Caco-2 (cell line): ENCODE measurements at regions of chr12 and their contacts with region 1.

Region 1: DNA sequence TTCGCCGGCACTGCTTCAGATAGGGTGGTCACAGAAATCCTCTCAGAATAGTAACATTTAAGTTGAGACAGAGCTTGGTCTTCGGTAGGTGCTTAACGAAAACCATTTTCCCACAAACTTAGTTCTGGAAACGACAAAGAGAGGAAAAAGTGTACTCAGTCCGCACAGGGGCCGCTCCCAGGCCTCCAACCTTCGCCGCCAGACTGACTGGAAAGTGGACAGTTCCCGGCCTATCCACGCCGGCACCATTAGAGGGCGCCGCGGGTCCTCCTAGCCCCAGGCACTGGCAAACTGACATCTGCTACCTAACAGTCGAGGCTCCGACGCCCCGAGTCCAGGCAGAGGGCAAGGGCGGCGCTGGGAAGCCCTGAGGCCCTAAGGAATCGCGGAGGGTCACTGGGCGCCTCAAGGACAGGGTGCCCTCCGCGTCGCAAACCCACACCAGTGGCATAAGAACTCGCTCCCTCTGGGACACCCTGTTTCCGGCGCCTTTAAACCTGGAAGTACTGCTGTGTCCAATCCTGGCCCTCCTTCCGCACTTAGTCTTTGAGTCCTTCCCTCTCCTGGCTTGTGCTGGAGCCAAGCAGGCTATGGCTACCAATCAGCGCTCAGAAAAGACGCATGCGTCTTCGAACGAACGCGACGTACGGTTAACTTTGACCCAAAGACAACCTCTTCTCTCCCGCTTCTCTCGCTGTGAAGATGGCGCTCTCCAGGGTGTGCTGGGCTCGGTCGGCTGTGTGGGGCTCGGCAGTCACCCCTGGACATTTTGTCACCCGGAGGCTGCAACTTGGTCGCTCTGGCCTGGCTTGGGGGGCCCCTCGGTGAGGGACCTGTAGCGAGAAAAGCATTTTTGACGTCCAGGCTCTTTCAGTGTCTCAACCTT is at the start of gene LETMD1:
- DNase-seq: peak; percentile 96 to 98
- H3K4me3 ChIP-seq: peak within 1 kb of the TSS; percentile 64
- H3K4me3 Mint-ChIP-seq: peak within 1 kb of the TSS; percentile 99
- H3K27ac Mint-ChIP-seq: peak within 1 kb of the TSS; percentile 96
- H3K4me1 ChIP-seq: no peaks in the 10 kb centered on the region
- H3K4me1 Mint-ChIP-seq: no peaks in the 10 kb centered on the region
- H3K27me3 ChIP-seq: no peaks in the 10 kb centered on the region
- H3K27me3 Mint-ChIP-seq: no peaks in the 10 kb centered on the region
- CTCF ChIP-seq: peak; percentile 93 to 99
- total RNA-seq, gene LETMD1: 90.6 and 95.6 TPM in 2 replicates

Region 2: GRCh38 chr12:50620109-50620977 is 427.6 kb before region 1 on chr12:
- CTCF ChIA-PET with region 1: no interaction called
- POLR2A ChIA-PET with region 1: no interaction called
- intact Hi-C with region 1: no loop called
- DNase-seq: peak; percentile 50 to 54
- H3K4me3 ChIP-seq: no peak overlapping the region
- H3K4me3 Mint-ChIP-seq: peak overlapping the region; percentile 11
- H3K27ac Mint-ChIP-seq: peak overlapping the region; percentile 94
- H3K4me1 ChIP-seq: peaks cover 67% of the 10 kb centered on the region
- H3K4me1 Mint-ChIP-seq: peaks cover 60% of the 10 kb centered on the region
- H3K27me3 ChIP-seq: no peaks in the 10 kb centered on the region
- H3K27me3 Mint-ChIP-seq: no peaks in the 10 kb centered on the region
- CTCF ChIP-seq: no peak

Region 3: GRCh38 chr12:50848963-50849362 is 198.9 kb before region 1 on chr12:
- CTCF ChIA-PET with region 1: no interaction called
- POLR2A ChIA-PET with region 1: no interaction called
- intact Hi-C with region 1: no loop called
- DNase-seq: no peak
- H3K4me3 ChIP-seq: no peak overlapping the region
- H3K4me3 Mint-ChIP-seq: no peak overlapping the region
- H3K27ac Mint-ChIP-seq: no peak overlapping the region
- H3K4me1 ChIP-seq: peaks cover 8% of the 10 kb centered on the region; the same call in 1 of the 2 replicates
- H3K4me1 Mint-ChIP-seq: peaks cover 7% of the 10 kb centered on the region
- H3K27me3 ChIP-seq: no peaks in the 10 kb centered on the region
- H3K27me3 Mint-ChIP-seq: peaks cover 15% of the 10 kb centered on the region
- CTCF ChIP-seq: no peak

Region 4: GRCh38 chr12:51009056-51009440 is 38.9 kb before region 1 on chr12:
- CTCF ChIA-PET with region 1: no interaction called
- POLR2A ChIA-PET with region 1: no interaction called
- intact Hi-C with region 1: no loop called
- DNase-seq: no peak
- H3K4me3 ChIP-seq: no peak overlapping the region
- H3K4me3 Mint-ChIP-seq: no peak overlapping the region
- H3K27ac Mint-ChIP-seq: peak overlapping the region; percentile 14
- H3K4me1 ChIP-seq: peaks cover 26% of the 10 kb centered on the region
- H3K4me1 Mint-ChIP-seq: peaks cover 29% of the 10 kb centered on the region
- H3K27me3 ChIP-seq: no peaks in the 10 kb centered on the region
- H3K27me3 Mint-ChIP-seq: no peaks in the 10 kb centered on the region
- CTCF ChIP-seq: no peak

Region 5: GRCh38 chr12:51070004-51070403 is 22.1 kb after region 1 on chr12:
- CTCF ChIA-PET with region 1: interaction called, 7 read pairs
- POLR2A ChIA-PET with region 1: interaction called, 3 read pairs
- intact Hi-C with region 1: loop called (anchors 1 kb)
- DNase-seq: peak; percentile 73 to 87
- H3K4me3 ChIP-seq: no peak overlapping the region
- H3K4me3 Mint-ChIP-seq: no peak overlapping the region
- H3K27ac Mint-ChIP-seq: peak overlapping the region; percentile 79
- H3K4me1 ChIP-seq: peaks cover 10% of the 10 kb centered on the region; the same call in 1 of the 2 replicates
- H3K4me1 Mint-ChIP-seq: peaks cover 16% of the 10 kb centered on the region
- H3K27me3 ChIP-seq: no peaks in the 10 kb centered on the region
- H3K27me3 Mint-ChIP-seq: no peaks in the 10 kb centered on the region
- CTCF ChIP-seq: no peak